Aorta (tissue), 5 donors: ENCODE measurements at regions of chr14 and their contacts with region 1.

Region 1: GRCh38 chr14:59360923-59361794 is 104.0 kb downstream of the GPR135 start:
- DNase-seq: peak in 1 of 2 donors; percentile 78
- ATAC-seq: peak; percentile 24
- H3K4me3 ChIP-seq: no peak overlapping the region
- H3K27ac ChIP-seq: peak overlapping the region; percentile 7 to 20
- H3K4me1 ChIP-seq: peaks cover 4 to 14% of the 10 kb centered on the region in 2 donors
- H3K27me3 ChIP-seq: no peaks in the 10 kb centered on the region

Region 2: DNA sequence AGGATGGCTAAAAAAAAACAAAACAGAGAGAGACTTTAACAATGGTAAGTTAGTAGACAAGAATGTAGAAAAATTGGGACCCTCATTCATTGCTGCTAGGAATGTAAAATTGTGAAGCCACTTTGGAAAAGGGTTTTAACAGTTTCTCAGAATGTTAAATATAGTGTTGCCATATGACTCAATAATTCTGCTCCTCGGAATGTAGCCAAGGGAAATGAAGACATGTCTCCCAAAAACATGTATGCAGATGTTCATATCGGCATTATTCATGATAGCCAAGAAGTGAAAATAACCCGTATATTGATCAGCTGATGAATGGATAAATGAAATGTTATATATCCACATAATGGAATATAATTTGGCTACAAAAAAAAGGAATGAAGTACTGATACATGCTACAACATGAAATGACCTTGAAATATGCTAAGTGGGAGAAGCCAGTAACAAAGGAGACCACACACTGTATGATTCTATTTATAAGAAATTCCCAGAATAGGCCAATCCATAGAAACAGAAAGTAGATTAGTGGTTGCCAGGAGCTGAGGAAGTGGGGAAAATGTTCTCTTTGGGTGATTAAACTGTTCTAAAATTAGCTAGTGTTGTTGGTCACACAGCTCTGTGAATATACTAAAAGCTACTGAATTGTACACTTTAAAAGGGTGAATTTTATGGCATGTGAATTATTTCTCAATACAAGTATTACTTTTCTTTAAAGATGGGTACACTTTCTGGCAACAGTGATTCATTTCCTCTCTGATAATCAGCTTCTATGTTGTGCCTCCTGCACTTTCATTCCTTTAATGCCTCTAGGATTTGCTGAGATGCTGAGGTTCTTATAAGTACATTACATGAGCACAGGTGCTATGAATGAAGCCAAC is 40.2 kb before region 1 on chr14:
- intact Hi-C with region 1: no loop called
- DNase-seq: no peak
- ATAC-seq: peak; percentile 76
- H3K4me3 ChIP-seq: peak overlapping the region in 1 of 2 donors; percentile 10
- H3K27ac ChIP-seq: peak overlapping the region; percentile 57 to 84
- H3K4me1 ChIP-seq: peaks cover 8 to 16% of the 10 kb centered on the region in 2 donors
- H3K27me3 ChIP-seq: no peaks in the 10 kb centered on the region

Region 3: DNA sequence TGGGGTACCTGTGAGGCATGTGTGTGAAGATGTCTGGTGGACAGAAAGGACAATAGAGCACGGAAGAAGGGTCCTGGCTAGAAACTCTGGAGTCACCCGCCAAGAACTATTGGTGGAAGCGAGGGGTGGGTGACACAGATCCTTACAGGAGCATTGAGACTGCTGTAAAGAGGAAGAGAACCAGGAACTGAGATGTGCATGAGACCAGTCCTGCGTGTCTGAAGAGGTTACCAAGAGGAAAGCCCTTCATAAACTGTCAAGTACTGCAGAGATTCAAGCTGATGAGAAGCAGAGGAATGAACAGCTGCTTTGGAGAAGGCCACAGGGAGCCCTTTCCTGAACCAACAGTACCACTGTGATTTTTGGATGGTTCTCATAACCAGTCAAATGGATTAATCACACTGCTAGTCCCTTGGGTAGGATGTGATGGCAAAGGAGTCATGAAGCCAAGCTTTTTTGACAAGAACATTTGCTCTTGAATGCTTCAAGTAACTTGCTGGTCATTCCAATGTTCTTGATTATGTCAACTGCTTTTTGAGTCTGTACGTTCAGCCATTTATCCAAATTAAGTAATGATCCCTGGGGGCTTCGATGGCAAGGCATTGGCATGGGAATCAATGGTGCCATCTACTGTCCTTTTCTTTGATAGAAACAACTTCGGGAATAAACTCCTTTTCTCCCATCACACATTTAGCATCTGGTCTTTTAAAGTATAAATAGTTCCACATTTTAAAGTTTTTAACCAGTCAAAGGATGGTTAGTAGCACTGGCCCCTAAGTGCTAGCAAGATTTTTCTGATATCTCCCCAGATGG is 61.1 kb after region 1 on chr14:
- intact Hi-C with region 1: loop called (anchors 5 kb)
- DNase-seq: no peak
- ATAC-seq: peak; percentile 34
- H3K4me3 ChIP-seq: no peak overlapping the region
- H3K27ac ChIP-seq: peak overlapping the region in 1 of 2 donors; percentile 65
- H3K4me1 ChIP-seq: peaks cover 3 to 14% of the 10 kb centered on the region in 2 donors
- H3K27me3 ChIP-seq: no peaks in the 10 kb centered on the region

Region 4: DNA sequence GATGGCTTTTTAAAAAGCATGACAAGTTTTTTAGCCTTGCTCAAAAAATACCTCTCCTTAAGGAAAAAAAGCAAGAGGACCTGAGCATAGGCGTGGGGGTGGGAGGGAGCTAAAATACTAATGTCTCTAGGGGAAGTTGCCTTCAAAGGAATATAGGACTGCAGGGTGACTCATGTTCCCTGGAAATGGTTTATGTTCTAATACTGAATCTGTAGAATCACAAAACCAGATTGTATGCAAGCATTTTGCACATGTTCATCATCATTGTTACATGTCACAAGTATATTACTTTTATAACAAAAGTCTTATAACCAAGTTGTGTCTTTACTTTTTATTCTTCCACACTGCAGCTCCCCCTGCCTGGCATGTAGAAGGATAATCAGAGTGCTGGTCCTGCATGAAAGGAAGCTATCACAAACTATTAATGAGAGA is 67.4 kb after region 1 on chr14:
- intact Hi-C with region 1: loop called (anchors 5 kb)
- DNase-seq: no peak
- ATAC-seq: peak; percentile 33
- H3K4me3 ChIP-seq: no peak overlapping the region
- H3K27ac ChIP-seq: peak overlapping the region; percentile 11 to 62
- H3K4me1 ChIP-seq: peaks cover 3 to 7% of the 10 kb centered on the region in 2 donors
- H3K27me3 ChIP-seq: no peaks in the 10 kb centered on the region